GM12878 (cell line): ENCODE measurements at regions of chr3 and their contacts with region 1.

Region 1: GRCh38 chr3:23888617-23889228 is 28.1 kb downstream of the NKIRAS1 start:
- DNase-seq: no peak
- ATAC-seq: peak; percentile 56
- H3K4me3 ChIP-seq: no peak overlapping the region
- H3K27ac ChIP-seq: no peak overlapping the region
- H3K4me1 ChIP-seq: no peaks in the 10 kb centered on the region
- H3K27me3 ChIP-seq: no peaks in the 10 kb centered on the region
- CTCF ChIP-seq: peak; percentile 61 to 73 (median 70)
- EP300 ChIP-seq: no peak
- POLR2A ChIP-seq: no peak
- RAD21 ChIP-seq: peak; percentile 78

Region 2: DNA sequence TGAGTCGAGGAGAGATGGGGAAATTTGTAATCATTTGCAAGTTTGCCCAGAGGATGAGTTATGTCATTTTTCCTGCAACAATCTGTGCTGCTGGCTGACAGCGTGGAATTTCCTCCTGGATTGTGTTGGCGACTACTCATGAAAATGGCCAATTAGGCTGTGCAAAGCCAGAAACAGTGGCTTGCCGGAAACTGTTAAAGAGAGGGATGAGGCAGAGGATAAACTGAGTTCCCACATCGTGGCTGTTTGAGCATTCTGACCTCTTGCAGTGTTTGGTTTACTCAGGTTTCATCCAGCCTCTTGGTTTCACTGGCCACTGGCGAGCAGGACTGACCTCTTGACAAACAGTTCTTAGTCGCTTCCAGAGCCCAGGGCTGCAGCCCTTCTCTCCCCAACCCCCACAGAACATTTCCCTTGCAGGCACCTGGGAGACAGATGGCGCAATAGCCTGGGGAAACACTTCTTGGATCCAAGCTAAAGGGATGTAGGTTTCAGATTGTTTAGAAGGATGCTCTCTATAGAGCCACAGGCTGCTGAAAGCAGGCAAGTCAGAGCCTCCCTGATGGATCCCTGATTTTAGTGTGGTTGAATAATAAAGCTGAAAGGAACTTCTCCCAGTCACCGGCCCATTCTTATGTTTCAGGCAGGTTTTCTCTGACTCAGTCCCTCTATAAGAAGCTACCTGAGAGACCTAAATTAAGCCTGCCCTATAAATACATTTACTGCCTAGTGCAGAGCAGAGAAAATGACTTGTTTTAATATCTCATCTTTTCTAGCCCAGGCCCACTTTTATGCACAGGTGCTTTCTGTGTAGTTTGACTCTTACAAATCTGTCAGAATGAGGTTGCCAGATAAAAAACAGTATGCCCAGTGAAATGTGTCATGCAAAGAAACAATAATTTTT is 175.8 kb before region 1 on chr3:
- CTCF ChIA-PET with region 1: no interaction called
- POLR2A ChIA-PET with region 1: no interaction called
- RAD21 ChIA-PET with region 1: no interaction called
- SMC1A ChIA-PET with region 1: no interaction called
- in situ Hi-C with region 1: no loop called
- intact Hi-C with region 1: no loop called
- DNase-seq: no peak
- ATAC-seq: no peak
- H3K4me3 ChIP-seq: no peak overlapping the region
- H3K27ac ChIP-seq: no peak overlapping the region
- H3K4me1 ChIP-seq: peaks cover 3% of the 10 kb centered on the region; the same call in 1 of the 2 replicates
- H3K27me3 ChIP-seq: no peaks in the 10 kb centered on the region
- CTCF ChIP-seq: peak in 1 of 3 experiments; percentile 20; a peak in 1 of 6 replicates
- EP300 ChIP-seq: no peak
- POLR2A ChIP-seq: no peak
- RAD21 ChIP-seq: no peak

Region 3: GRCh38 chr3:23865595-23866450 is 22.9 kb before region 1 on chr3:
- CTCF ChIA-PET with region 1: interaction called, 11 read pairs
- POLR2A ChIA-PET with region 1: no interaction called
- RAD21 ChIA-PET with region 1: interaction called, 6 read pairs
- SMC1A ChIA-PET with region 1: interaction called, 7 read pairs
- in situ Hi-C with region 1: no loop called
- intact Hi-C with region 1: no loop called
- DNase-seq: peak; percentile 45
- ATAC-seq: peak; percentile 89
- H3K4me3 ChIP-seq: peak overlapping the region; percentile 10; the same call in 1 of the 2 replicates
- H3K27ac ChIP-seq: peak overlapping the region; percentile 63
- H3K4me1 ChIP-seq: peaks cover 22% of the 10 kb centered on the region
- H3K27me3 ChIP-seq: no peaks in the 10 kb centered on the region
- CTCF ChIP-seq: no peak
- EP300 ChIP-seq: peak; percentile 63 to 77; a peak in 2 of 4 replicates
- POLR2A ChIP-seq: no peak
- RAD21 ChIP-seq: no peak

Region 4: GRCh38 chr3:23916886-23917678 is 28.4 kb after region 1 on chr3 and contains the starts of genes NKIRAS1 and RPL15:
- CTCF ChIA-PET with region 1: interaction called, 19 read pairs
- POLR2A ChIA-PET with region 1: interaction called, 5 read pairs
- RAD21 ChIA-PET with region 1: interaction called, 5 read pairs
- SMC1A ChIA-PET with region 1: interaction called, 11 read pairs
- in situ Hi-C with region 1: no loop called
- intact Hi-C with region 1: no loop called
- DNase-seq: peak; percentile 89
- ATAC-seq: peak; percentile 90
- H3K4me3 ChIP-seq: peak within 1 kb of the TSS; percentile 100
- H3K27ac ChIP-seq: peak within 1 kb of the TSS; percentile 95
- H3K4me1 ChIP-seq: peaks cover 3% of the 10 kb centered on the region
- H3K27me3 ChIP-seq: no peaks in the 10 kb centered on the region
- CTCF ChIP-seq: peak in 2 of 3 experiments; percentile 15 to 38; a peak in 2 of 6 replicates
- EP300 ChIP-seq: peak; percentile 42 to 71; a peak in 2 of 4 replicates
- POLR2A ChIP-seq: peak; percentile 100
- RAD21 ChIP-seq: no peak
- polyA plus RNA-seq, gene NKIRAS1: 8.9 to 10.2 TPM
- polyA plus RNA-seq, gene RPL15: 6,967 to 10,761 TPM

Region 5: DNA sequence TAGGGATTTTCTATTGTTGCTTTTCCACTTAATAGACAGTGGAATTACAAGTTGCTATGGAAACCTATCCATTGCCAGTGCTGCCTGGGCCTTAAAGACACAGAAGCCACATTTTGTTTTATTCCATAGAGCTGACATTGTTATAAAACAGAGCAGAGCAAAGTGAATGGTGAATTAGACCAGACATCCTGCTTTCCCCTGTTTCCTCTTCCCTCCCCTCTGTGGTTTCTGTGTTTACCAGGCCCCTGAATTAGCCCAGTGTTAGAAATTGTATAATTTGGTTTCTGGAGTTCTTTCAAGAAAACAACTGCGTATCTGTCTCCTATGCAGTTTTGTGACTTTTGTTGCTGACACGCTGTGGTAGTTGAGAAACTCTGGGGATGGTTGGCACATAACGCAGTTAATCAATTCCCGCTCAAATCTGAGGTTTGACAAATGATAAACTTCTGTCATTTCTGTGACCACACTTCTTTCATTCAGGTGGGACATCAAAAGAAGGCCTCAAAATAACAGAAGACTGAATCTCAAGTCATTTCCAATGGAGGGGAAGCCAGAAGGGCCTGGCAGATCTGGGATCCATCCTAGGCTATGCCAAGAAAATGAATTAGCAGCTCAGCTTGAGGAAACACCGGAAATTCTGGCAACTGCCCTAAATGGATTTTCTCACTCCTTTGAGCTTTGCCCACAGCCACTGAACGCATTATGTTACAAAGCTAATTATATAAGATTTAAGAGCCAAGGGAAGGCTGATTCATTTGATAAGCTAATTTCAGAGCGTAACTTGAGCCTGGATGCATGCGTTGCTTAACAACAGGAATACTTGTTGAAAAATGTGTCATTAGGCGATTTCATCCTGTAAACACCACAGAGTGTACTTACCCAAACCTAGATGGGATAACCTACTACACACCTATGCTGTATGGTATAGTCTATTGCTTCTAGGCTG is 103.2 kb after region 1 on chr3:
- CTCF ChIA-PET with region 1: interaction called, 15 read pairs
- POLR2A ChIA-PET with region 1: no interaction called
- RAD21 ChIA-PET with region 1: interaction called, 15 read pairs
- SMC1A ChIA-PET with region 1: interaction called, 11 read pairs
- in situ Hi-C with region 1: no loop called
- intact Hi-C with region 1: loop called (anchors 5 kb)
- DNase-seq: no peak
- ATAC-seq: no peak
- H3K4me3 ChIP-seq: no peak overlapping the region
- H3K27ac ChIP-seq: no peak overlapping the region
- H3K4me1 ChIP-seq: no peaks in the 10 kb centered on the region
- H3K27me3 ChIP-seq: no peaks in the 10 kb centered on the region
- CTCF ChIP-seq: no peak
- EP300 ChIP-seq: no peak
- POLR2A ChIP-seq: no peak
- RAD21 ChIP-seq: no peak

Region 6: DNA sequence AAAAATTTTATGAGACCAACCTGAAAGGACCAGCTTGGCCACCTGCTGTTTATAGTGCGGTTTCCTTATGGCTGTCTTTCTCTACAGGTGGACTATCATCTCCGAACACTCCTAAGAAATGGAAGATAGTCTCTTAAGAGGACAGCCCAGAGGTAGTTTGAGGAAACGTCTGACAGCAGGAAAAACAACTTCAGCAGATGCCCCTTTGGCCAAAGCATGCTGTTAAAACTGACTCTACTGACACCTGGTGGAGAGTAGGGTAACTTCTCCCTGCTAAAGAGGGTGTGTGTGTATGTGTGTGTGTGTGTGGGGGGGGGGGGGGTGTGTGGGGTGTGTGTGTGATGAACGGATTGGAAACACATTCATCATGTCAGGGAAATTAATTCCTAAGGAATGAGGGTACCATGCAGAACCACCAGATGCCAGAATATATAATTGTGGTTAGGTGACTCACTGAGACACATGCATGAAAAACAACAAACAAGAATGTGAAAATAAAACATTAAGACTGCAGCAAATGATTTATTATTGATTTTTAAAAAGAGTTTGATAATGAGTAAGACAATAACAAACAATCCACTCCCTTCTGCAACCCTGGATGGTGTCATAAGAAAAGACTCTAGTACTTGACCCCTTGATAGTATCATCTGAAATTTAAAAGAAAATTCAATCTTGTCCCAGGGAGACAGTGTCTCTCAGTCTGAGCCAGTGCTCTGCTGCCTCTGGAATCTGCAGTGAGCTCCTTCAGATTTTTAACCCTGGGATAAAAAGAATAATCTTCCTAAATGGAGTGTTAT is 349.4 kb after region 1 on chr3:
- CTCF ChIA-PET with region 1: interaction called, 4 read pairs
- POLR2A ChIA-PET with region 1: no interaction called
- RAD21 ChIA-PET with region 1: interaction called, 3 read pairs
- SMC1A ChIA-PET with region 1: interaction called, 4 read pairs
- in situ Hi-C with region 1: loop called (anchors 10 kb)
- intact Hi-C with region 1: loop called (anchors 2 kb)
- DNase-seq: peak; percentile 8
- ATAC-seq: peak; percentile 93
- H3K4me3 ChIP-seq: no peak overlapping the region
- H3K27ac ChIP-seq: no peak overlapping the region
- H3K4me1 ChIP-seq: no peaks in the 10 kb centered on the region
- H3K27me3 ChIP-seq: no peaks in the 10 kb centered on the region; a peak in 1 of 4 replicates
- CTCF ChIP-seq: peak; percentile 73 to 79 (median 78)
- EP300 ChIP-seq: no peak
- POLR2A ChIP-seq: no peak
- RAD21 ChIP-seq: peak; percentile 87

Region 7: GRCh38 chr3:24305795-24306467 is 417.2 kb after region 1 on chr3:
- CTCF ChIA-PET with region 1: no interaction called
- POLR2A ChIA-PET with region 1: no interaction called
- RAD21 ChIA-PET with region 1: no interaction called
- SMC1A ChIA-PET with region 1: no interaction called
- in situ Hi-C with region 1: no loop called
- intact Hi-C with region 1: no loop called
- DNase-seq: no peak
- ATAC-seq: no peak
- H3K4me3 ChIP-seq: no peak overlapping the region
- H3K27ac ChIP-seq: no peak overlapping the region
- H3K4me1 ChIP-seq: no peaks in the 10 kb centered on the region
- H3K27me3 ChIP-seq: no peaks in the 10 kb centered on the region
- CTCF ChIP-seq: no peak
- EP300 ChIP-seq: no peak
- POLR2A ChIP-seq: no peak
- RAD21 ChIP-seq: no peak